Endothelial cell of umbilical vein (primary cell): ENCODE measurements at regions of chr17 and their contacts with region 1.

Region 1: DNA sequence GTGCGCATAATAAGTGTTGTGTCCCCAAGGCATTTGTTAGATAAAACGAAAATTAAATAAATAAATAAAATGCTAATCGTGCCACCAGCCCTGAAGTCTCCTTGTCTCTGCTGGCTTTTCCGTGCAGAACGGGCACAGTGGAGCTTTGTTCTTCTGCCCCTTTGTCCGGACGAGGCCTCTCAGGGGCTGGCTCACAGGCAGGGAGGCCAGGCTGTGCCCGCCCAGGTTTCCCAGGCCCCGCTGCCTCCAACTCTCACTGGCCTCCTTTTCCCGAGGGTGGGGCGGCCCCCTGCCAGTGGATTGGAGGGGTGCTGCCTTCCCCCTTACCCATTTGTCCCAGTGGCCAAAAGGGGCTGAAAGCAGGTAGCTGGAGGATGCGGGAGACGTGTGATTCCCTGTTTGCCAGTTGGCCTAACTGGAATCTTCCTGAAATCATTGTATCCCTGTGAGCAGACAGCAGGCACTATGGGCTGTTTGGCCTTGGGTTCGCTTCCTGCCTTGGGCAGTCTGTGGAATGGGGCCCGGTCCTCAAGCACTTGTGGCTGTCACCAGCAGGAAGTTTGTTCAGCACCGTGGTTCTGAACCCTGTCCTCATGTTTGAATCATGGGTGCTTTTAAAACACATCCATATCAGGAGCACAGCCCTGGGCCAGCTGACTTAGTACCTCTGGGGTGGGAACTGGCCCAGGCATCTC is 64.4 kb downstream of the KSR1 start:
- DNase-seq: no peak
- H3K4me3 ChIP-seq: no peak overlapping the region
- H3K27ac ChIP-seq: no peak overlapping the region
- H3K4me1 ChIP-seq: no peaks in the 10 kb centered on the region
- H3K27me3 ChIP-seq: no peaks in the 10 kb centered on the region
- CTCF ChIP-seq: no peak
- POLR2A ChIP-seq: no peak

Region 2: DNA sequence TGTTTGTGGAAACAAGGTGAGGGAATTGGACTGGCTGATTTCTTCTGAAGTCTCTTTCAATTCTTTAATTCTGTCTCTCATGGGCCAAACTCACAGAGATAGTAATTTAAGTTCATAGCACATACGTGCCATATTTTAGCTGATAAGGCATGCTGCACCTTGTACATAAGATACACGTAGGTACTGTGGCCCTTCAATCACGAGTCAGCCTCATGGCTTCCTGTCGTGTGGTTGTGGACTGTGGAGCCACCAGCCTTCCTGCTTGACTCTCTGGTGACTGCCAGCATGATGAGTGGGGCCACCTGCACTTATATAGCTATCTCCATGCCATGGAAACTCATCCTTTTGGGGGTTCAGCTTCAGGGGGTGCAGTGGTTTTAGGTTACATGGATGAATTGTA is 39.3 kb before region 1 on chr17:
- CTCF ChIA-PET with region 1: no interaction called
- POLR2A ChIA-PET with region 1: no interaction called
- dilution Hi-C with region 1: no loop called
- intact Hi-C with region 1: loop called (anchors 5 kb)
- DNase-seq: no peak
- H3K4me3 ChIP-seq: no peak overlapping the region
- H3K27ac ChIP-seq: no peak overlapping the region
- H3K4me1 ChIP-seq: peaks cover 3% of the 10 kb centered on the region
- H3K27me3 ChIP-seq: no peaks in the 10 kb centered on the region
- CTCF ChIP-seq: no peak
- POLR2A ChIP-seq: no peak